Natural killer cell (primary cell): ENCODE measurements at regions of chr1 and their contacts with region 1.

Region 1: DNA sequence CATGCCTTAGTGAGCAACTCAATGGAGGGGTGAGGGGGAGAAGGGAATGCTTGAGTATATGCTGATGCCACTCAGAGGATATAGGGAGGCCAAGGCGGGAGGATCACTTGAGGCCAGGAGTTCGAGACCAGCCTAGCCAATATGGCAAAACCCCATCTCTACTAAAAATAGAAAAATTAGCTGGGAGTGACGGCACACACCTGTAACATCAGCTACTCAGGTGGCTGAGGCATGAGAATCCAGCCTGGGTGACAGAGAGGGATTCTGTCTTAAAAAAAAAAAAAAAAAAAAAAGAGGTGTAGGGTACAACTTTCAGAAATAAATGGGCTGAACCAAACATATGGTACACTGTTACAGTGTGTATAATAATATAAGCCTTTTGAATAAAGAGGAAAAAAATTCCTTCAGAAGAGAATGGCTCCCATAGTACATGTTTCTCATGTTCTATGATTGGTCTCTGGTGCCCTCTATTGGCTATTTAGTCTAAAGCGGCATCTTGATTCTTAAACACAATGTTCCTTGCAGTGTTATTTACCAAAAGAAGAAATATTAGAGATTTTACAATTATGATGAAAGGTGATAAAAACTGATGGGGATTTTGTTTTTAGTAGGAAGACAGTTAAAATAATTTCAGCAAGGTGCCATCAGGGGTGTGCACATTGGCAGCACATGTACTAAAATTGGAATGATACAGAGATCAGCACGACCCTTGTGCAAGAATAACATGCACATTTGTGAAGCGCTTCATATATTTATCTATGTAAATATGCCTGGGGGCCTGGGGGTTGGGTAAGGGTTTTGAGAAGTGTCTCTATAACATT is 109.8 kb downstream of the PATJ start:
- DNase-seq: peak in 1 of 2 donors; percentile 79
- ATAC-seq: peak; percentile 44 to 71 (median 53)
- H3K4me3 ChIP-seq: no peak overlapping the region
- H3K4me3 Mint-ChIP-seq: no peak overlapping the region
- H3K27ac ChIP-seq: no peak overlapping the region
- H3K27ac Mint-ChIP-seq: no peak overlapping the region
- H3K4me1 ChIP-seq: no peaks in the 10 kb centered on the region
- H3K4me1 Mint-ChIP-seq: no peaks in the 10 kb centered on the region
- H3K27me3 ChIP-seq: no peaks in the 10 kb centered on the region
- H3K27me3 Mint-ChIP-seq: no peaks in the 10 kb centered on the region
- CTCF ChIP-seq: peak; percentile 82

Region 2: GRCh38 chr1:61453111-61453961 is 398.7 kb before region 1 on chr1:
- intact Hi-C with region 1: loop called (anchors 5 kb)
- DNase-seq: peak; percentile 53 to 82
- ATAC-seq: peak; percentile 81 to 84 (median 82)
- H3K4me3 ChIP-seq: no peak overlapping the region
- H3K4me3 Mint-ChIP-seq: no peak overlapping the region
- H3K27ac ChIP-seq: no peak overlapping the region
- H3K27ac Mint-ChIP-seq: peak overlapping the region; percentile 45 to 62
- H3K4me1 ChIP-seq: peaks cover 7% of the 10 kb centered on the region
- H3K4me1 Mint-ChIP-seq: peaks cover 27 to 34% of the 10 kb centered on the region in 2 donors
- H3K27me3 ChIP-seq: no peaks in the 10 kb centered on the region
- H3K27me3 Mint-ChIP-seq: peaks cover 0 to 24% of the 10 kb centered on the region in 2 donors
- CTCF ChIP-seq: peak; percentile 66

Region 3: DNA sequence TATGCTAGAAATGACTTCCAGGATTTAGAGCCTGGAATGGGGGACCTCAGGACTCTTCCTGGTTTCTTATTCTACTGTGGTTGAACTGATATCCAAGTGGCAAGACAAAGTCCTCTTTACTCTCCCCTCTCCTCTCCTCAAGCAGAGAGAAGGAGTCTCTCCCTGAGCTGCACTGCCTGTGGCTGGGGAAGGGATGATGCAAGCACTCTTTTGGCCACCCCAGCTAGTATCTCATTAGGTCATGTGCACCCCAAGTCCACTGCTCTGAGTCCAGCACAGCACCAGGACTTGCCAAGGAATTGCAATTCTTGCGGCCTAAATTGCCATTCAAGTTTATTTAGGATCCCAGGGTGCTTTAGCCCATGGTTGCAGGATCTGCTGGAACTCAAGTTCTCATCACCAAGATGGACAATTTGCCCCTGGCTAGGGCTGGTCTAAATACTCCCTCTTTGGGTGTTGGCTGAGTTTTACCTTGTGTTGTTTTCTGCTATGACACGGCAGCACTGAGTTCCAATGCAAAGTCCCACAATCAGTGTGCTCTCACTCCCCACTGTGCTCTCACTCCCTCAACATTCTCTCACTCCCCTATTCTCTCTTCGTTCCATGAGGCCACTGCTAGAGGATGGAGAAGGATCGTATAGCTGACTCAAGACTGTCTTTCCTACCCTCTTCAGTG is 299.3 kb before region 1 on chr1:
- intact Hi-C with region 1: loop called (anchors 1 kb)
- DNase-seq: no peak
- ATAC-seq: no peak
- H3K4me3 ChIP-seq: no peak overlapping the region
- H3K4me3 Mint-ChIP-seq: no peak overlapping the region
- H3K27ac ChIP-seq: no peak overlapping the region
- H3K27ac Mint-ChIP-seq: no peak overlapping the region
- H3K4me1 ChIP-seq: no peaks in the 10 kb centered on the region
- H3K4me1 Mint-ChIP-seq: no peaks in the 10 kb centered on the region
- H3K27me3 ChIP-seq: no peaks in the 10 kb centered on the region
- H3K27me3 Mint-ChIP-seq: no peaks in the 10 kb centered on the region
- CTCF ChIP-seq: no peak

Region 4: GRCh38 chr1:61825393-61825792 is 26.7 kb before region 1 on chr1:
- intact Hi-C with region 1: no loop called
- DNase-seq: no peak
- ATAC-seq: no peak
- H3K4me3 ChIP-seq: no peak overlapping the region
- H3K4me3 Mint-ChIP-seq: no peak overlapping the region
- H3K27ac ChIP-seq: no peak overlapping the region
- H3K27ac Mint-ChIP-seq: no peak overlapping the region
- H3K4me1 ChIP-seq: no peaks in the 10 kb centered on the region
- H3K4me1 Mint-ChIP-seq: no peaks in the 10 kb centered on the region
- H3K27me3 ChIP-seq: no peaks in the 10 kb centered on the region
- H3K27me3 Mint-ChIP-seq: no peaks in the 10 kb centered on the region
- CTCF ChIP-seq: no peak